Colonic mucosa (tissue), 4 donors: ENCODE measurements at regions of chr9 and their contacts with region 1.

Region 1: GRCh38 chr9:81609782-81610739 is 79.3 kb downstream of the TLE1 start:
- DNase-seq: no peak
- H3K4me3 ChIP-seq: no peak overlapping the region
- H3K27ac ChIP-seq: no peak overlapping the region
- H3K4me1 ChIP-seq: no peaks in the 10 kb centered on the region
- H3K27me3 ChIP-seq: no peaks in the 10 kb centered on the region
- CTCF ChIP-seq: no peak

Region 2: GRCh38 chr9:81207651-81208050 is 402.4 kb before region 1 on chr9:
- intact Hi-C with region 1: loop called (anchors 10 kb)
- DNase-seq: no peak
- H3K4me3 ChIP-seq: no peak overlapping the region
- H3K27ac ChIP-seq: no peak overlapping the region
- H3K4me1 ChIP-seq: no peaks in the 10 kb centered on the region
- H3K27me3 ChIP-seq: no peaks in the 10 kb centered on the region
- CTCF ChIP-seq: no peak